ENCODE measurements at regions of chr18 and their contacts with region 1.

Region 1: GRCh38 chr18:5456577-5457463 is 87.0 kb downstream of the EPB41L3 start:
- DNase-seq: peak in 2 of 5 donors; percentile 30 to 57
- ATAC-seq: peak; percentile 58 to 94 (median 88)
- H3K4me3 ChIP-seq: peak overlapping the region in 6 of 12 donors; percentile 2 to 39 (median 31)
- H3K27ac ChIP-seq: peak overlapping the region in 4 of 12 donors; percentile 5 to 73 (median 41)
- H3K4me1 ChIP-seq: peaks cover 0 to 30% (median 0%) of the 10 kb centered on the region in 12 donors
- H3K27me3 ChIP-seq: no peaks in the 10 kb centered on the region
- CTCF ChIP-seq: peak in 11 of 12 donors; percentile 24 to 55 (median 40)
- POLR2A ChIP-seq: no peak

Region 2: GRCh38 chr18:5515011-5515784 is 58.4 kb after region 1 on chr18:
- intact Hi-C with region 1: loop called in 2 of 10 experiments (anchors 10 kb)
- DNase-seq: no peak
- ATAC-seq: peak in 2 of 4 donors; percentile 54 to 62
- H3K4me3 ChIP-seq: peak overlapping the region in 1 of 12 donors; percentile 9
- H3K27ac ChIP-seq: peak overlapping the region in 6 of 12 donors; percentile 1 to 89 (median 38)
- H3K4me1 ChIP-seq: peaks cover 0 to 69% (median 0%) of the 10 kb centered on the region in 12 donors
- H3K27me3 ChIP-seq: no peaks in the 10 kb centered on the region
- CTCF ChIP-seq: no peak
- POLR2A ChIP-seq: no peak

Region 3: DNA sequence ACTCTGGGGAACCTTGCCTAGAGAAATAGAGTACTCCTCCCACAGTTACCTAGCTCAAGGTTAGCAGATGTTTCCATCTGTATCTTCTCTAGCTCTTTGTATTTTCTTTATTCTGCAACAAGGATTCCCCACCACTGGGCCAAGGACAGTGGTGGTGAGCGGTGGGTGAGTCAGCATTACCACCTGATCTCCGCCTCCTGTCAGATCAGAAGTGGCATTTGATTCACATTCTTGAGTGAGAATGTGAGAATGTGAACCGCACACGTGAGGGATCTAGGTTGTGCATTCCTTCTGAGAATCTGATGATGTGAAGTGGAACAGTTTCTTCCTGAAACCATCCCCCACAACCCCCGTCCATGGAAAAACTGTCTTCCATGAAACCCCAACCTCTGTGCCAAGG is 78.0 kb after region 1 on chr18:
- intact Hi-C with region 1: loop called in 5 of 10 experiments (anchors 10 kb)
- DNase-seq: no peak
- ATAC-seq: no peak
- H3K4me3 ChIP-seq: no peak overlapping the region
- H3K27ac ChIP-seq: no peak overlapping the region
- H3K4me1 ChIP-seq: peaks cover 0 to 15% (median 0%) of the 10 kb centered on the region in 12 donors
- H3K27me3 ChIP-seq: no peaks in the 10 kb centered on the region
- CTCF ChIP-seq: no peak
- POLR2A ChIP-seq: no peak

Region 4: DNA sequence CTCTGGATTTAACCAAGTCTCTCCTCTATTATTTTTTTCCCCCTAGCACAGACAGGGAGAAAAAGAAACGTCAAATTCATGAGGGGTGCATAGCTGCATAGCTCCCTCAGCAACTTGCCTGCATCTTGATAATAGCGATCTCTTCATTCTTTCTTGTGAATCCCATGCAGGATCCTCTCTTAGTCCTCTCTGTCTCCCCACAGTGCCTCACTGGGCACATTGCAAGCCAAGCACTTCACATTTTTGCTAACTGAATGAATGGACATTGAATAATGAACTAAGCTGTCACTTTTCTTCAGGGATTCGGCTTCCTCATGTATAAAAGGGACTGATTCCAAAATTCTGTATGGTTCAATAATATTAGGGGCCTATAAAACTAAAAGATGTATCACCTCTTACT is 89.8 kb after region 1 on chr18:
- intact Hi-C with region 1: loop called in 5 of 10 experiments (anchors 5 to 10 kb)
- DNase-seq: no peak
- ATAC-seq: peak in 3 of 4 donors; percentile 57 to 76 (median 68)
- H3K4me3 ChIP-seq: no peak overlapping the region
- H3K27ac ChIP-seq: no peak overlapping the region
- H3K4me1 ChIP-seq: peaks cover 0 to 20% (median 0%) of the 10 kb centered on the region in 12 donors
- H3K27me3 ChIP-seq: peaks cover 0 to 21% (median 10%) of the 10 kb centered on the region in 9 donors
- CTCF ChIP-seq: peak in 8 of 12 donors; percentile 19 to 59 (median 36)
- POLR2A ChIP-seq: no peak

Region 5: DNA sequence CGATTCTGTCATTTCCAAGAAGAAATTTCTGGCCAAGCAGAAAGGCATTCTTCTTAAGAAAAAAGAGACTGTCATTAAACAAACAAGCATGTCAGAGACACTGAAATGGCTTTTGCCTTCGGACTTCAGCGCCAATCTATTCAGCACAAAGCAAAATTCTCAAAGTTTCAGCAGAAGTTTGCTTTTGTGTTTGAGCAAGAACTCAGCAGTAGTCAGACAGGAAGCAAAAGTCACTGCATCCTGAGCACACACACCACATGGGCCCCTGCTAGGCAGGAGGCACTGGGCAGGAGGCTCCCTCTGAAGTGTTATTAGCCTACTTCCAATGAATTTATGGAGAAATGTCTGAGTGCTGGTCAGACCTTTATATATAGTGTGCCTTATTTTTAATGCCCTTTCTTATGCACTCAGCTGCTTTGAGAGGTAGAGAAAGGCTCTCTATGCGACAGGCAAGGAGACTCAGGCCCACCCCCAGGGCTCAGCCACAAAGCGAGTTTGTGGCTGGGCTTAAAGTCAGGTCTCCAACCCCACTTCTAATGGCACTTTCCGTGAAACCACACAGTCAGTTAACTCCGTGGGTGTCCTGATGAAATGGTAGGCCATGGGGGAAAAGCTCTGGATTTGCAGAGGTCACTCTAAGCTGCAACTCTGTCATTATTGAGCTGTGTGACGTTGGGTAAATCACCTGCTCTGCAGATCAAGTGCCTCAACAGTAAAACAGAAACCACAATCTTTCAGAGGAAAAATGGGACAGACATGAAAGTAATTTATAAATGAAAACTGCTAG is 599.5 kb after region 1 on chr18:
- intact Hi-C with region 1: no loop called
- DNase-seq: no peak
- ATAC-seq: peak in 1 of 4 donors; percentile 20
- H3K4me3 ChIP-seq: no peak overlapping the region
- H3K27ac ChIP-seq: peak overlapping the region in 8 of 12 donors; percentile 19 to 67 (median 36)
- H3K4me1 ChIP-seq: peaks cover 0 to 43% (median 10%) of the 10 kb centered on the region in 12 donors
- H3K27me3 ChIP-seq: no peaks in the 10 kb centered on the region
- CTCF ChIP-seq: no peak
- POLR2A ChIP-seq: no peak